PC-9 (cell line): ENCODE measurements at regions of chr1 and their contacts with region 1.

Region 1: GRCh38 chr1:164748253-164748899 is 189.4 kb downstream of the PBX1 start:
- DNase-seq: peak; percentile 46 to 97
- H3K4me3 ChIP-seq: peak overlapping the region; percentile 9; the same call in 1 of the 2 replicates
- H3K27ac ChIP-seq: peak overlapping the region; percentile 92
- H3K4me1 ChIP-seq: peaks cover 69% of the 10 kb centered on the region
- H3K27me3 ChIP-seq: no peaks in the 10 kb centered on the region
- CTCF ChIP-seq: no peak

Region 2: DNA sequence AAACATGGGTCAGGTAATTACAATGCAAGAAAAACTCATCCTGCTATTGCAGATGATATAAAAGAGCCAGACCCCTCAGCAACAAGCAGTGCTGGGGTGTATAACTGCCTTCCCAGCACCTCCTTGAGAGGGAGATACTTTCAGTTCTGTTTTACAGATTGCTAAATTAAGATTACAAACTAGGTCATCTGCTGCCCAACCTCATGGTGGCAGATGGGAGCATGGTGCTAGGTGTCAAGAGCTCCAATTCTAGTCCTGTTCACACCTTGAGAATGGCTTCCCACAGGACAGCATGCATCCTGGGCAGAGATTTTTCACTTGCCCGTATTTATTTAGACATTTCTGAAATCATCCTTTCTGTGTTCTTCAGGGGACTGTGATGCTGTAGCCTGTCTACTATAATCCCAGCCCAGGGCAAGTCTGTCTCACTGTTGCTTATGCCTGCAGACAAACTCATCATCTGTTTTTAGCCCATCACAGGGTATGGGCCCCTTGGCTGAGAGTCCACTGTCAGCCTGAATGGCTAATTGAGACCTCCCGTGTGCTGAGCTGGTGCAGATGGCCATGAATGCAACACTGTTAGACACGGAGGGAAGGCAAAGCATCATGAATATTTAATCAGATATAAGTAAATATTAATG is 229.6 kb before region 1 on chr1:
- CTCF ChIA-PET with region 1: no interaction called
- POLR2A ChIA-PET with region 1: no interaction called
- intact Hi-C with region 1: no loop called
- DNase-seq: no peak
- H3K4me3 ChIP-seq: no peak overlapping the region
- H3K27ac ChIP-seq: no peak overlapping the region
- H3K4me1 ChIP-seq: no peaks in the 10 kb centered on the region
- H3K27me3 ChIP-seq: no peaks in the 10 kb centered on the region
- CTCF ChIP-seq: no peak

Region 3: DNA sequence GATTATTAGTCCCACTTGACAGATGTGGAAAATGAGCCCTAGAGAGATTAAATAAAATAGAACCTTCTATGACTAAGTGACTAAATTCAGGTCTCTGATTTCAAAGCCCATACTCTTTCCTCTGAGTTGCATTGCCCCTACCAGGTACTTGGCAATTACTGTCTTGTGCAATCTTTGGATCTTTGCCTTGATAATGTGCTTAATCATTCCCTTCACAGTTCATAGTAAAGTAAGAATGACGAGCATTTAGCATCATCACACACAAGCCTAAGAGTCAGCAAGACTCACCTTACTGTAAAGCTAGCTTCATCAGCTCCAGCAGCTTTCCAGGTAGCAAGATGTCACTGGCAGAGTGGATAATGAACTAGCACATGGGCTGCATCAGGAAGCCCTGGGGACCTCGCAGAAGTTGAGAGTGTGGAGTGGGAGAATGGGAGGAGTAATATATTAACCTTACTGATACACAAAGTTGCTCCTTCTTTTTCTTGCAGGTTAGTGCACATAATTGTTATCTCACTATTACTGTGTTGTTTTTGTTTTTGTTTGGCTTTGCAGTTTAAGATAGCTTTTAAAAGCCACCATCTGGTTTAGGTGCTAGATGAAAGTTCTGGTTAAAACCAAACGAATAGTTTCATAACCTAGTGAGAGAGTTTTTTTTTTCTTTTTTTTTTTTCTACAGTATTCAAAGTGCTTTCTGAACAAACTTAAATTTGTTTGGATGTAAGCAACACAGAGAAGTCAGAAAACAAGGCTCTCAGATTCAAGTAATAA is 117.6 kb before region 1 on chr1:
- CTCF ChIA-PET with region 1: no interaction called
- POLR2A ChIA-PET with region 1: no interaction called
- intact Hi-C with region 1: loop called (anchors 5 kb)
- DNase-seq: peak; percentile 22 to 95
- H3K4me3 ChIP-seq: peak overlapping the region; percentile 27; the same call in 1 of the 2 replicates
- H3K27ac ChIP-seq: peak overlapping the region; percentile 95
- H3K4me1 ChIP-seq: peaks cover 31% of the 10 kb centered on the region
- H3K27me3 ChIP-seq: no peaks in the 10 kb centered on the region
- CTCF ChIP-seq: no peak

Region 4: DNA sequence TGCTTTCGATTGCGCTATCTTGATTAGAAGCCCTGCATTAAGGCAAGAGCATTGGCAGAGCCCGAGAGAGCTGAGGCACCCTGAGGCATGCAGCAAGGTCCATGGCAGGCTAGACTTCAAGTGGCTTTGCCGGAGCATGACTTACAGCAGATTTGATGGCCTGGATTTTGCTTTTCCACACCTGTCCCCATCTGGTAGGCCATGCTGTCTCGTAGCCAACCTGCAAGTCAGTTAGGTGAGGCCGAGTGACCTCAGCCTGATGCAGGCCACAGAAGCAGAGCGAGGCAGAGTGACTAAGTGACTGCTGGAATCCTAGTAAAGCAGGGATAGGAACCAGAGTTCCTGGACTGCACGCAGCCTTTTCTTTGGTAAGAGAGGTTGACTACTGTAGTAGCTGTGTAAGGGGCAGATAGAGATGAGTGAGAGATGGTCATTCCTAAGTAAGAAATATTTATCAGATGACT is 40.5 kb before region 1 on chr1:
- CTCF ChIA-PET with region 1: no interaction called
- POLR2A ChIA-PET with region 1: no interaction called
- intact Hi-C with region 1: loop called (anchors 1 kb)
- DNase-seq: peak; percentile 48 to 50
- H3K4me3 ChIP-seq: no peak overlapping the region
- H3K27ac ChIP-seq: peak overlapping the region; percentile 83
- H3K4me1 ChIP-seq: peaks cover 33% of the 10 kb centered on the region
- H3K27me3 ChIP-seq: no peaks in the 10 kb centered on the region
- CTCF ChIP-seq: no peak

Region 5: DNA sequence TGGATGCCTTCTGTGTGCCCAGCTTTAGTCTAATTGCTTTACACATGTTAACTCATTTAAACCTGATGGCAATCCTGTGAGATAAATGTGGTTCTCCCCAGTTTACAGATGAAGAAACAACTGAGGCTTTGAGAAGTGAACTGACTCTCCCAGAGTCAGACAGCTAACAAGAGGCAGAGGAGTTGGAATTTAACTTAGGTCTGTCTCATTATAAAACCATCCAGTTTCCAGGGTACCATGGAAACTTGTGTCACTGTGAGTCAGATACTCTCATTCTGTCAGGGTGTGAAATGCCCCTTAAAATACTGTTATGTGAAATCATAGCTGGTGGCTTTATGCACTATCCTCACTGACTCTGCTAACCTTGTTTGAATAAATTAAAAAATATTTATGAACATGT is 17.2 kb after region 1 on chr1:
- CTCF ChIA-PET with region 1: no interaction called
- POLR2A ChIA-PET with region 1: no interaction called
- intact Hi-C with region 1: loop called (anchors 1 kb)
- DNase-seq: peak in 1 of 2 experiments; percentile 79
- H3K4me3 ChIP-seq: no peak overlapping the region
- H3K27ac ChIP-seq: peak overlapping the region; percentile 96
- H3K4me1 ChIP-seq: peaks cover 62% of the 10 kb centered on the region
- H3K27me3 ChIP-seq: no peaks in the 10 kb centered on the region
- CTCF ChIP-seq: no peak

Region 6: DNA sequence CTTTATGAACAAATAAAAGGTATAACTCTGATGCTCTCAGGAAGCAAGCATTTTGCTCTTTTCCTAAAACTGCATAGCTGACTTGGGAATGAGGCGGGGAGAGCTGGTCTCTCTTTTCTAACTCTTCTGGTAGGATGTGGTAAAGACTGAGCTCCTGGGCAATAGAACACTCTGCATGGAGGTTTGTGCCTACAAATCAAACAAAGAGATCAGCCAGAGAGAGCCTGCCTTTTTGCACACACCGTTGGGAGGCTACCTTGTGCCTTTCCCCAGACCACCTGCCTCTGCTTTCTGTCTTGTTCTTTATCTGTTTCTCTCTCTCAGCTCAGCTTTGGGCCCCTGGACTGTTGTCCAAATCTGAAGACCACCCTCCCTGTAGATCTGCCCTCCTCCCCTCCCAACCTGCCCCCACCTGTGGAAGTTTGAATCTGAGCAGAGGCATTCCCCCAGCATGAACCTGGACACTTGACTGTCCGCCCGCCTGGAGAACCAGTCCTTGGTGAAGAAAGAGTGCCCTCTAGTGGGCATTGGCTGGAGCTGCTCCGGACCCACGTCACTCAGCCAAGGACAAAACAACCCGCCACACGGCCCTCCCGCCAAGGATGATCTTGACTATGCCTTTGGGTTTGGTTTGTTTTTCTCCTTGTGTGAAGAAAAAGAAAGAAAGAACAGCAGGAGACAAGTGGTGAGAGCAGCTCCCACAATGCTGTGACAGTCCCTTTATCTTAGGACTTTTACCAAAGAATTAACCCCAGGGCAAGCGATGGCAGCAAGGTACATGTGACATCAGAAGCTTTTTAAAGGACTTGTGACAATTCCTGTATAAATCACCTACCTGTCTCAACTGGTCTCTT is 38.8 kb after region 1 on chr1:
- CTCF ChIA-PET with region 1: no interaction called
- POLR2A ChIA-PET with region 1: no interaction called
- intact Hi-C with region 1: loop called (anchors 5 kb)
- DNase-seq: peak; percentile 66 to 78
- H3K4me3 ChIP-seq: no peak overlapping the region
- H3K27ac ChIP-seq: peak overlapping the region; percentile 54
- H3K4me1 ChIP-seq: peaks cover 22% of the 10 kb centered on the region
- H3K27me3 ChIP-seq: no peaks in the 10 kb centered on the region
- CTCF ChIP-seq: peak; percentile 95

Region 7: DNA sequence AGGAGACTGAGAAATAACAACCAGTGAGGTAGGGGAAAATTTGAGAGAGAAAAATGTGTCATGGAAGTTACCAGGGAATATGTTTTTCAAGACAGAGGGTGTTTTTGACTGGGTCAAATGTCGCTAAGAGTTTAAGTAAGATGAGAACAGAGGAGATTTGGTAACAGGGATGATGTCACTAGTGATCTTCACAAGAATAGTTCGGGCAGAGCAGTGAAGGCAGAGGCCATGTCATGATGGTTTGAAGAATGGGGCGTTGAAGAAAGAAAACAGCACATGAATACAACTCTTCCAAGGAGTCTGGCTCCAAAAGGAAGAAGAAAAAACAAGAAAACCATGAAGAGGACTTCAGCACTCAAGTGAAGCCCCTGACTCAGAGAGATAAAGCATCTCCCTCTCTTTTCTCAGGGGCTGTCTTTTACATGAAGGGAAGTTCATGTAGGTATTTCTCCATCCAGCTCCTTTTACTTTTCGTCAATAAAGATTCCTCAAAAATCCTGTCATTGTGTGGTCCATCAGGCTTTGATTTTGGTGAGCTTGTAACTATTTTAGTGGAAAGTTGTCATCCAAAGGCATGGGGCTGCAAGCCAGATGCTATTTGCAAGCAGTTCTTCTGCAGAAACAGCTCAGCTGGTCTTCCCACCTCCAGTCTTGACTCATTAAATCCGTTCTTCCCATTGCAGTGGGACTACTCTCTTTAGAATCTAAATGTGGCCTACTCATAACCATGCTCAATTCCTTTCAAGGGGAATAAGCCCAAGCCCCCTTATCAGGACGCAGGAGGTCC is 210.8 kb after region 1 on chr1:
- CTCF ChIA-PET with region 1: no interaction called
- POLR2A ChIA-PET with region 1: no interaction called
- intact Hi-C with region 1: no loop called
- DNase-seq: no peak
- H3K4me3 ChIP-seq: no peak overlapping the region
- H3K27ac ChIP-seq: no peak overlapping the region
- H3K4me1 ChIP-seq: no peaks in the 10 kb centered on the region
- H3K27me3 ChIP-seq: no peaks in the 10 kb centered on the region
- CTCF ChIP-seq: no peak